ENCODE measurements at regions of chr11 and their contacts with region 1.

Region 1: DNA sequence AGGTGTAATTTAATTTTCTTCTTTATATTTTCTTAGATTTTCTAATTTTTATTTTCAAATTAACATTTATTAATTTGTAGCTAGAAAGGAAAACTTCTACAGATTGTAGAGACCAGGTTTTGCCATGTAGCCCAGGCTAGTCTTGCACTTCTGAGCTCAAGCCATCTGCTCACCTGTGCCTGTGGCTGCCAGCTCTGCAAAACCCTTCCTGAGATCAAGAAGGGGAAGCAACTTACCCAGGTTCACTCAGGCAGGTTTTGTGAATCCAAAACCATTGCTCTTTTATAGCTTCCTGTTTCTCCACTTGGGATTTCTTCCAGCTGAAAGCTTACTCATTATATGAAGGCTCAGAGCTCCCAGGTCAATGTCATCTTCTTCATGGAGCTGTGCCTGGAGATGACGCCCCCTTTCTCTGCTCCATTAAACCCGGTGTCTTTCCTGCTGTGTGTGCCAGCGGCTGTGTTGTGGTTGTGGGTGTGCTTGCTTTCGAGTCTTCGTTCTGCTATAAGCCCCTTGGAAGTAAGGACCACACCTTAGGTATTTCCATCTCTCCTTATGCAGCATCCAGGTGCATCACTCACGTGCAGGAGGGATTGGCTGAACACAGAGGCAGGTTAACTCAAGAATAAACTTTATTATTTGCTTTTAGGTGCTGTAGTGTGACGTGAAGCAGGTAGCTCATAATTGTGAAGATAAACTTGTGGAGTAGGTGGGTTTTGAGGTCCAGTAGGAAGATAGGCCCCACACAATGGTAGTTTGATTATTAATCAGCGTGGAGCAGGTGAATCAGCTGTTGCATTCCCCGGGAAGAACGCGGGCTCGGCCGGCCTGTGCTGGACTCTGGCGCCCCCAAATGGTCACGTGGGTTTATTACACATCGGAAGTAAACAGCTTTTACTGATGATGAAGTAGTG is 42.2 kb upstream of the INCENP start:
- DNase-seq: peak; percentile 8
- ATAC-seq: peak; percentile 85
- H3K4me3 ChIP-seq: peak overlapping the region; percentile 11; the same call in 1 of the 2 replicates
- H3K27ac ChIP-seq: no peak overlapping the region
- H3K4me1 ChIP-seq: peaks cover 5% of the 10 kb centered on the region; the same call in 1 of the 2 replicates
- H3K27me3 ChIP-seq: no peaks in the 10 kb centered on the region
- CTCF ChIP-seq: peak; percentile 89 to 99 (median 89); a peak in 5 of 6 replicates
- EP300 ChIP-seq: no peak
- POLR2A ChIP-seq: no peak
- RAD21 ChIP-seq: peak; percentile 96

Region 2: DNA sequence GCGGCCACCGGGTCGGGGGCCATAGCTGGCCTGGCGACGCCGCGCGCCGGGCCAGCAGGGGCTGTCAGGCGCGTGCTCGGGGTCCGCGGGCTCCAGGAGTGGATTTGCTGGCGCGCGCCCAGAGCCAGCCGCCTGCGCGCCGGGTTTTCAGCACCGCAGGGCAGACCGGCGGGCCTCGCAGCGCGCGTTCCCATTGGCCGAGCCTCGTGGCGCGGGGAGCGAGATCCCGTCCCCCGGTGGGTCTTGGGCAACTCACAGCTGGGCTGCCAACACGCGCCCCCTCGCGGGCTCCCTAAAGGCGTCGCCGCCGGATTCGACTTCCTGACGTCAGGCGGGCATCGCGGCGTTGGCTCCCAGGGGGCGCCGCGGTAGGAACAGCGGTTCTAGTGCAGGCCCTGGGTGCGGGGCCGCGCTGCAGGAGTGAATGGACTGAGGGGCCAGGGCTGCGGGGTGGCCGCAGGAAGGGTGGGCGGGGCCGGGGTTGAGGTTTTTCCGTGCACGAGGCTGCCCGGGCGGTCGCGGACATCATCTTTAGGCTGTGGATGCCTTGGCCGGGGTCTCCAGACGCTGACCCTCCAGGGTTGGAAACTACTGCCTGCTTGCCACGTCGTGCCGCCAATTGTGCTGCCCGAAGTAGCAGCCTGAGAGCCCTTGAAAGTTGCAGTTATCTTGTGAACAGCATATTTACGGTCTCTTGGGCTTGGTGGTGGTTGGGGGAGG is 264.7 kb before region 1 on chr11 and contains the start of gene FADS1:
- CTCF ChIA-PET with region 1: interaction called, 11 read pairs
- POLR2A ChIA-PET with region 1: no interaction called
- RAD21 ChIA-PET with region 1: interaction called, 3 read pairs
- SMC1A ChIA-PET with region 1: interaction called, 8 read pairs
- in situ Hi-C with region 1: no loop called
- intact Hi-C with region 1: no loop called
- DNase-seq: peak; percentile 60
- ATAC-seq: peak; percentile 71
- H3K4me3 ChIP-seq: peak within 1 kb of the TSS; percentile 81
- H3K27ac ChIP-seq: peak within 1 kb of the TSS; percentile 87
- H3K4me1 ChIP-seq: peaks cover 3% of the 10 kb centered on the region; the same call in 1 of the 2 replicates
- H3K27me3 ChIP-seq: no peaks in the 10 kb centered on the region
- CTCF ChIP-seq: peak; percentile 53 to 73 (median 69)
- EP300 ChIP-seq: no peak
- POLR2A ChIP-seq: peak; percentile 60
- RAD21 ChIP-seq: no peak
- polyA plus RNA-seq, gene FADS1: 8.8 to 14.6 TPM

Region 3: GRCh38 chr11:61899146-61899841 is 182.3 kb before region 1 on chr11:
- CTCF ChIA-PET with region 1: interaction called, 321 read pairs
- POLR2A ChIA-PET with region 1: interaction called, 3 read pairs
- RAD21 ChIA-PET with region 1: interaction called, 175 read pairs
- SMC1A ChIA-PET with region 1: interaction called, 168 read pairs
- in situ Hi-C with region 1: loop called (anchors 5 kb)
- intact Hi-C with region 1: loop called (anchors 1 kb)
- DNase-seq: peak; percentile 40
- ATAC-seq: peak; percentile 95
- H3K4me3 ChIP-seq: no peak overlapping the region
- H3K27ac ChIP-seq: no peak overlapping the region
- H3K4me1 ChIP-seq: no peaks in the 10 kb centered on the region
- H3K27me3 ChIP-seq: peaks cover 0 to 1% of the 10 kb centered on the region in 2 experiments; a peak in 1 of 4 replicates
- CTCF ChIP-seq: peak; percentile 99 to 100 (median 99)
- EP300 ChIP-seq: no peak
- POLR2A ChIP-seq: no peak
- RAD21 ChIP-seq: peak; percentile 85

Region 4: DNA sequence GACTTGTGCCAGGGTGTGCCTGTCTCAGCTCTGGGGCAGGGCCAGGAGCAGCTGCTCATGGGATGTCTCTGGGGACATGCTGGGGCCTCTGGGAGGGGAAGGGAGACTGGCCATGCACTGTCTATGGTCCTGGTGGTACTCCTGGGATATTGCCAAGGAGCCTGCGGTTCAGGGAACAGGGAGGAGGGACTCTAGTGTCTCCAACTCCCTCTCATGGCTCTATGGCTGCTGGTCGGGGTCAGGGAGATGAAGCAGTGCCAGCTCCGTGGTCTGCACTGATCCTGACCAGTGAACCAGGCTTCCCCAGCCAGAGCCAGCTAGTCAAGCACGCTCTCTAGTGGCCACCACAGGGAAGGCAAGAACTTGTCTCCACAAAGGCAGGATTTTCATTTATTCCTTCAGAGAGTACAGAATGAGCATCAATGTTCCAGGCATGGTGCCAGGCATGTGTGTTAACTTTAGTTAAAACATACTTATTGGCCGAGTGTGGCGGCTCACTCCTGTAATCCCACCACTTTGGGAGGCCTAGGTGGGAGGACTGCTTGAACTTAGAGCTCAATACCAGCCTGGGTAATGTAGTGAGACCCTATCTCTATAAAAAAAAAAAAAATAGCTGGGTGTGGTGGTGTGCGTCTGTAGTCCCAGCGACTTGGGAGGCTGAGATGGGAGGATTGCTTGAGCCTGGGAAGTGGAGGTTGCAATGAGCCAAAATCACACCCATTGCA is 134.0 kb before region 1 on chr11:
- CTCF ChIA-PET with region 1: interaction called, 136 read pairs
- POLR2A ChIA-PET with region 1: interaction called, 3 read pairs
- RAD21 ChIA-PET with region 1: interaction called, 39 read pairs
- SMC1A ChIA-PET with region 1: interaction called, 50 read pairs
- in situ Hi-C with region 1: no loop called
- intact Hi-C with region 1: loop called (anchors 1 kb)
- DNase-seq: no peak
- ATAC-seq: peak; percentile 93
- H3K4me3 ChIP-seq: no peak overlapping the region
- H3K27ac ChIP-seq: no peak overlapping the region
- H3K4me1 ChIP-seq: no peaks in the 10 kb centered on the region
- H3K27me3 ChIP-seq: no peaks in the 10 kb centered on the region; a peak in 1 of 4 replicates
- CTCF ChIP-seq: peak; percentile 94 to 98 (median 96)
- EP300 ChIP-seq: no peak
- POLR2A ChIP-seq: no peak
- RAD21 ChIP-seq: peak; percentile 94

Region 5: GRCh38 chr11:62025487-62026105 is 56.0 kb before region 1 on chr11:
- CTCF ChIA-PET with region 1: interaction called, 4 read pairs
- POLR2A ChIA-PET with region 1: no interaction called
- RAD21 ChIA-PET with region 1: interaction called, 4 read pairs
- SMC1A ChIA-PET with region 1: interaction called, 10 read pairs
- in situ Hi-C with region 1: no loop called
- intact Hi-C with region 1: no loop called
- DNase-seq: peak; percentile 56
- ATAC-seq: peak; percentile 93
- H3K4me3 ChIP-seq: peak overlapping the region; percentile 24; the same call in 1 of the 2 replicates
- H3K27ac ChIP-seq: peak overlapping the region; percentile 30; the same call in 1 of the 2 replicates
- H3K4me1 ChIP-seq: peaks cover 8% of the 10 kb centered on the region
- H3K27me3 ChIP-seq: no peaks in the 10 kb centered on the region
- CTCF ChIP-seq: no peak
- EP300 ChIP-seq: peak in 1 of 2 experiments; percentile 41; a peak in 1 of 4 replicates
- POLR2A ChIP-seq: 0 out of 2 replicates have a peak, but pooled peaks have one; percentile 19
- RAD21 ChIP-seq: no peak

Region 6: DNA sequence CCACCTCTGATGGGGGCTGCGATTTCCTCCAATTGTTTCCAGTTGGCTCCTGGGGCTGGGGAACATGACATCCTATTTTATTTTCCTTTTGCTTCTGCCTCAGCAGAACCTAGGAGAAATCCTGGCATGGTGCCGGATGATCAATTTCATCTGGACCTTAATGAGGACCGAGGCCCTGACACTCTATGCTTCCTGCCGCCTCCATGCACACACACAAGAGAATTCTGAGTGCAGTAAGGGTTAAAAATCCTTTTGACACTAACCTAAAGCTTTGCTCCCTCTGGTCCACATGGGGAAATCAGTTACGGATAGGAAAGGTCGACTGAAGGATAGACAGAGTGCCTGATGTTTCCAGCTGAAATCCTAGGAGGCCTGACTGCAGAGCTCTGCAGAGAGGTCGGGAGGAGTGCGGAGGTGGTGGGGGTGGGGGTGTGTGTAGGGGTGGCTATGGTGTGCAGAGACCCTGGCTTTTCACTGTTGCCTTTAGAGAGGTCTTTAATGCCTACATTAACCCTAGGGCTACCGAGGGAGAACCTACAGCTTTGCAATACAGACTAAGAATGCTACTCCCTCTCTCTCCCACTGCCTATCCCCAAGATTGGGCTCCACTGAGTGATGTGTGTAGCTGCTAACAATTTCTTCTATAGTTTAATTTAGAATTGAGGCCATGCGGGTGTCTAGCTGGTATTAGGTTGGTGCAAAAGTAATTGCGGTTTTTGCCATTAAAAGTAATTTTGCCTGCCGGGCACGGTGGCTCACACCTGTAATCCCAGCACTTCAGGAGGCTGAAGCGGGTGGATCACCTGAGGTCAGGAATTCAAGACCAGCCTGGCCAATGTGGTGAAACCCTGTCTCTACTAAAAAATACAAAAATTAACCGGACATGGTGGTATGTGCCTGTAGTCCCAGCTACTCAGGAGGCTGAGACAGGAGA is 11.4 kb before region 1 on chr11:
- CTCF ChIA-PET with region 1: interaction called, 20 read pairs
- POLR2A ChIA-PET with region 1: no interaction called
- RAD21 ChIA-PET with region 1: interaction called, 3 read pairs
- SMC1A ChIA-PET with region 1: interaction called, 9 read pairs
- in situ Hi-C with region 1: no loop called
- intact Hi-C with region 1: no loop called
- DNase-seq: no peak
- ATAC-seq: no peak
- H3K4me3 ChIP-seq: no peak overlapping the region
- H3K27ac ChIP-seq: no peak overlapping the region
- H3K4me1 ChIP-seq: no peaks in the 10 kb centered on the region
- H3K27me3 ChIP-seq: peaks cover 0 to 1% of the 10 kb centered on the region in 2 experiments; a peak in 1 of 4 replicates
- CTCF ChIP-seq: no peak
- EP300 ChIP-seq: no peak
- POLR2A ChIP-seq: no peak
- RAD21 ChIP-seq: no peak